A673 (cell line): ENCODE measurements at regions of chr13 and their contacts with region 1.

Region 1: DNA sequence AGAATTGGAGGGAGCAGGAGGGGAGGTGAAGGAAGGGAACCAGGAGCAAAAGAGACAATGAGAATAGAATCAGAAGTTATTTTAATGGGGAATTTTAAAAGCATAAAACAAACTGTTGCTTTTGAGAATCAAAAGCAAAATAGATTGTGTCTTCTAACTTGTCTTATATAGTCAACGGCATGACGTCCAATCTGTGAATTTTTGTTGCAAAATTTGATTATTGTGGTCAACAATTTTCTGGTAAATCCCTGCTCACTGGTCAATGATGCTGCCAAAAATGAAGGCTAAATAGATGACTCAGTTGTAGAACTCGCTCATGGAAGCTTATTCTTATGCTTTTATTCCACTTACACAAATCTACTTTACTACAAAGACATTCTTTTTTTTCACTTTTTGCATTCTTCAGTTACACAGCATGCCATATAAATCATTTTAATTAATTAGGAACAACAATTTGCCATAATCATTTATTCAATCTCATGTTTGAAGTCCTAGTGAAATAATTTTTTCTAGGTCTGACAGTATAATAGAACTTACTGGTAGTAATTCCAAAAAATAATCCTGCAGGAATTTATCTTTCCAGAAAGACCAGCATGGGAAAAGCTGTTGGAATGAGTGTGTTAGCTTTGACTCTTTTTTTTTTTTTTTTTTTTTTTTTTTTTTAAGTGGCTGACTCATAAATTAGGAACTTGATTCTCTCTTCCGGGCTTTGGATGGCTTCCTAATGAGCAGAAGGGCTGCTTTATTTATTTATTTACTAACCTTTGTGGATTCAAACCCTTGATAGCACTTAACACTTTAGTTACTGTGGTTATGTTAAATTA is 256.9 kb downstream of the SPRY2 start:
- DNase-seq: peak; percentile 86
- H3K4me3 ChIP-seq: peak overlapping the region; percentile 2
- H3K27ac ChIP-seq: peak overlapping the region; percentile 26
- H3K4me1 ChIP-seq: peaks cover 28% of the 10 kb centered on the region
- H3K27me3 ChIP-seq: no peaks in the 10 kb centered on the region
- CTCF ChIP-seq: no peak

Region 2: GRCh38 chr13:79901336-79901735 is 182.7 kb before region 1 on chr13:
- CTCF ChIA-PET with region 1: no interaction called
- POLR2A ChIA-PET with region 1: no interaction called
- intact Hi-C with region 1: loop called (anchors 5 kb)
- DNase-seq: peak; percentile 93
- H3K4me3 ChIP-seq: no peak overlapping the region
- H3K27ac ChIP-seq: no peak overlapping the region
- H3K4me1 ChIP-seq: peaks cover 33% of the 10 kb centered on the region
- H3K27me3 ChIP-seq: no peaks in the 10 kb centered on the region
- CTCF ChIP-seq: peak; percentile 58

Region 3: GRCh38 chr13:80157261-80157932 is 73.3 kb after region 1 on chr13:
- CTCF ChIA-PET with region 1: no interaction called
- POLR2A ChIA-PET with region 1: no interaction called
- intact Hi-C with region 1: no loop called
- DNase-seq: peak; percentile 66
- H3K4me3 ChIP-seq: no peak overlapping the region
- H3K27ac ChIP-seq: peak overlapping the region; percentile 52
- H3K4me1 ChIP-seq: peaks cover 7% of the 10 kb centered on the region
- H3K27me3 ChIP-seq: no peaks in the 10 kb centered on the region
- CTCF ChIP-seq: no peak

Region 4: DNA sequence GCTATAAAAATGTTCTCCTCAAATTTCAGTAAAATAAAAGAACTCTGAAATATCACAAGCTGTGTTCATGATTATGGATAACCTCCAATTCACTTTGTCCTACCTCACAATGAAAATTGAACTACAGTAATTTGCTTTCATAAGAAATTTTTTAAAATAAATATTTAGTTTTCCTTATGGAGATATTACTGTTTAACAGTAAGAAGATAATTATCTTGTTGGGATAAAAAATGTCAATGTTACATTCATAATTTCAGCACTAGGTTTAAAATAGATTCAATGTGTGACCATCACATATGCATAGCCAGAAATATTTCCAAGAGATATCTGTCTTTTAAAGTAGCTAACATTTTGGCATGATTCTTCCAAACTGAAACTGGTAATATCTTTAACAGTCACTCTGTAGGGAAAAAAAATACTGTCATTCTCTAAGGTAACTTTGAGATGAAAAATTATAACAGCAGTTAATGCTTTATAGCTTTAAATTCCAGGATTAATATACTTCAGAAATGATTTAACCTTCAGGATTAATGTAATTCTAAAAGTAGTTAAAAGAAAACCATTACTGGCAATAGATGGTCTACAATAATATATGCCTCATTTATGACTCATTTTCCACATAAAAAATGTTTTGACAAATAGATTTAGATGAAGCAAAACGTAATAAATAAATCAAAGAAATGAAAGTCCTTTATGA is 165.6 kb after region 1 on chr13:
- CTCF ChIA-PET with region 1: no interaction called
- POLR2A ChIA-PET with region 1: no interaction called
- intact Hi-C with region 1: loop called (anchors 5 kb)
- DNase-seq: no peak
- H3K4me3 ChIP-seq: no peak overlapping the region
- H3K27ac ChIP-seq: no peak overlapping the region
- H3K4me1 ChIP-seq: peaks cover 21% of the 10 kb centered on the region
- H3K27me3 ChIP-seq: peaks cover 13% of the 10 kb centered on the region
- CTCF ChIP-seq: no peak